ENCODE measurements at regions of chr1 and their contacts with region 1.

Region 1: DNA sequence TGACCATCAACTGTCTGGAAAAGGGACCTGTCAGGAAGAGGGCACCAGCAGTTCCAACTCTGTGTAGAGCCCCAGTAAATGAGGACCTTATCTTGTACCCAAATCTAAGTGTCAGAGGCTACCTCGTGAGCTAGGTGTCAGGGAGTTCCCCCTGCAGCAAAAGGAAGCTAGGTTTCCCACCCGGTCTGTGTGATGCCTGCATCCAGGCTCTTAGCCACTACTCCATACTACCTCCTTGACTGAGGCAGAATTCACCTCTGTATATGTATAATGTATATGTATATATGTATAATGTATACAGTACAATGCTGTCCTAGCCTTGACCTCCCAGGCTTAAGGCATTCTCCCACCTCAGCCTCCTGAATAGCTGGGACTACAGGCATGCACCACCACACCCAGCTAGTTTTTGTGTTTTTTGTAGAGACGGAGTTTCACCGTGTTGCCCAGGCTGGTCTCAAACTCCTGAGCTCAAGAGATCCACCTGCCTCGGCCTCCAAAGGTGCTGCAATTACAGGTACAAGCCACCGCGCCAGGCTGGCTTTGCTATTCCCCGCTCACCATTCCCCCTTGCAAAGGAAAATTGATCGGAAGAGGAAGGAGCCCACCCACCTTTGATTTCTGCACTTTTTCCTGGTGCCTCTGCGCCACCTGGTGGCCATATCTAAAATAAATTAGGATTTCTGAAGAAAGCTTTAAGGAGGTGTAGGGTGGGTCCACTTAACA is 15.7 kb upstream of the LUZP1 start:
- DNase-seq: peak in 2 of 3 donors; percentile 36 to 44
- H3K4me3 ChIP-seq: no peak overlapping the region
- H3K4me3 Mint-ChIP-seq: peak overlapping the region; percentile 37 to 53
- H3K27ac ChIP-seq: no peak overlapping the region
- H3K27ac Mint-ChIP-seq: no peak overlapping the region
- H3K4me1 ChIP-seq: peaks cover 0 to 3% of the 10 kb centered on the region in 2 donors
- H3K4me1 Mint-ChIP-seq: peaks cover 6% of the 10 kb centered on the region
- H3K27me3 ChIP-seq: peaks cover 2 to 3% of the 10 kb centered on the region in 2 donors
- H3K27me3 Mint-ChIP-seq: peaks cover 10 to 13% (median 13%) of the 10 kb centered on the region in 3 donors
- CTCF ChIP-seq: peak; percentile 94

Region 2: GRCh38 chr1:22976461-22977243 is 207.7 kb before region 1 on chr1:
- intact Hi-C with region 1: loop called (anchors 1 to 2 kb)
- DNase-seq: peak; percentile 51 to 76 (median 65)
- H3K4me3 ChIP-seq: no peak overlapping the region
- H3K4me3 Mint-ChIP-seq: no peak overlapping the region
- H3K27ac ChIP-seq: no peak overlapping the region
- H3K27ac Mint-ChIP-seq: peak overlapping the region in 1 of 7 donors; percentile 53
- H3K4me1 ChIP-seq: no peaks in the 10 kb centered on the region
- H3K4me1 Mint-ChIP-seq: peaks cover 9% of the 10 kb centered on the region
- H3K27me3 ChIP-seq: peaks cover 0 to 1% of the 10 kb centered on the region in 2 donors
- H3K27me3 Mint-ChIP-seq: peaks cover 6 to 12% (median 9%) of the 10 kb centered on the region in 3 donors
- CTCF ChIP-seq: peak; percentile 80

Region 3: GRCh38 chr1:23098463-23099170 is 85.8 kb before region 1 on chr1:
- intact Hi-C with region 1: loop called (anchors 2 kb)
- DNase-seq: peak; percentile 21 to 47 (median 47)
- H3K4me3 ChIP-seq: no peak overlapping the region
- H3K4me3 Mint-ChIP-seq: peak overlapping the region in 1 of 2 donors; percentile 29
- H3K27ac ChIP-seq: no peak overlapping the region
- H3K27ac Mint-ChIP-seq: peak overlapping the region in 2 of 7 donors; percentile 6 to 19
- H3K4me1 ChIP-seq: peaks cover 24 to 40% of the 10 kb centered on the region in 2 donors
- H3K4me1 Mint-ChIP-seq: peaks cover 37% of the 10 kb centered on the region
- H3K27me3 ChIP-seq: no peaks in the 10 kb centered on the region
- H3K27me3 Mint-ChIP-seq: peaks cover 0 to 3% (median 0%) of the 10 kb centered on the region in 3 donors
- CTCF ChIP-seq: peak; percentile 90

Region 4: GRCh38 chr1:23251812-23252211 is 67.4 kb after region 1 on chr1:
- intact Hi-C with region 1: no loop called
- DNase-seq: no peak
- H3K4me3 ChIP-seq: no peak overlapping the region
- H3K4me3 Mint-ChIP-seq: no peak overlapping the region
- H3K27ac ChIP-seq: no peak overlapping the region
- H3K27ac Mint-ChIP-seq: no peak overlapping the region
- H3K4me1 ChIP-seq: no peaks in the 10 kb centered on the region
- H3K4me1 Mint-ChIP-seq: no peaks in the 10 kb centered on the region
- H3K27me3 ChIP-seq: no peaks in the 10 kb centered on the region
- H3K27me3 Mint-ChIP-seq: peaks cover 3 to 9% (median 4%) of the 10 kb centered on the region in 3 donors
- CTCF ChIP-seq: no peak

Measured in CD14-positive monocyte (primary cell).